Right lobe of liver (tissue), 6 donors: ENCODE measurements at regions of chr1 and their contacts with region 1.

Region 1: GRCh38 chr1:28789412-28789811 is 22.6 kb upstream of the OPRD1 start:
- DNase-seq: no peak
- ATAC-seq: no peak
- H3K4me3 ChIP-seq: no peak overlapping the region
- H3K27ac ChIP-seq: no peak overlapping the region
- H3K4me1 ChIP-seq: peaks cover 0 to 3% (median 0%) of the 10 kb centered on the region in 4 donors
- H3K27me3 ChIP-seq: no peaks in the 10 kb centered on the region
- CTCF ChIP-seq: no peak
- POLR2A ChIP-seq: no peak

Region 2: GRCh38 chr1:28417429-28417922 is 371.9 kb before region 1 on chr1:
- intact Hi-C with region 1: no loop called
- DNase-seq: no peak
- ATAC-seq: peak; percentile 32 to 94 (median 62)
- H3K4me3 ChIP-seq: no peak overlapping the region
- H3K27ac ChIP-seq: peak overlapping the region in 1 of 3 donors; percentile 44
- H3K4me1 ChIP-seq: peaks cover 0 to 16% (median 5%) of the 10 kb centered on the region in 4 donors
- H3K27me3 ChIP-seq: no peaks in the 10 kb centered on the region
- CTCF ChIP-seq: no peak
- POLR2A ChIP-seq: no peak

Region 3: DNA sequence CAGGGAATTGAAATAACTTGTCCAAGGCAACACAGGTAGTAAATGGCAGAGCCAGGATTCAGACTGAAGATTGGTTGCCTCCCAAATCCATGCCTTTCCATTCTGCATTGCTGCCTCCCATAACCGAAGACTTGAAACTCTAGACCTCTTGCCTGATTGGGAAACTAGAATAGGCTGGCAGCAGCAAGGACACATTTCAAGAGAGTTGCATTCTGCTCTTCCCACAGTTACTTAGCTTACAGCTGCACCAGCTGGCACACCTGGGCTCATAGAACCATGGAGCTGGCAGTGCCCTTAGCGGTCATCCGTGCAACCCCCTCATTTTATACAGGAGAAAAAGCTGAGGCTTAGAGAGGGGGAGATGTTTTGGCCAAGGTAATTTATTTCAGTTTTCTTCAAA is 228.5 kb before region 1 on chr1:
- intact Hi-C with region 1: no loop called
- DNase-seq: no peak
- ATAC-seq: no peak
- H3K4me3 ChIP-seq: no peak overlapping the region
- H3K27ac ChIP-seq: no peak overlapping the region
- H3K4me1 ChIP-seq: no peaks in the 10 kb centered on the region
- H3K27me3 ChIP-seq: no peaks in the 10 kb centered on the region
- CTCF ChIP-seq: no peak
- POLR2A ChIP-seq: no peak

Region 4: GRCh38 chr1:28865997-28866650 is 76.7 kb after region 1 on chr1:
- intact Hi-C with region 1: loop called in 1 of 2 experiments (anchors 5 kb)
- DNase-seq: no peak
- ATAC-seq: peak in 1 of 4 donors; percentile 73
- H3K4me3 ChIP-seq: no peak overlapping the region
- H3K27ac ChIP-seq: no peak overlapping the region
- H3K4me1 ChIP-seq: no peaks in the 10 kb centered on the region
- H3K27me3 ChIP-seq: no peaks in the 10 kb centered on the region
- CTCF ChIP-seq: no peak
- POLR2A ChIP-seq: no peak

Region 5: GRCh38 chr1:28877132-28877781 is 87.8 kb after region 1 on chr1:
- intact Hi-C with region 1: loop called in 1 of 2 experiments (anchors 5 kb)
- DNase-seq: peak; percentile 75 to 80 (median 76)
- ATAC-seq: peak; percentile 86 to 93 (median 88)
- H3K4me3 ChIP-seq: no peak overlapping the region
- H3K27ac ChIP-seq: no peak overlapping the region
- H3K4me1 ChIP-seq: peaks cover 0 to 6% (median 2%) of the 10 kb centered on the region in 4 donors
- H3K27me3 ChIP-seq: no peaks in the 10 kb centered on the region
- CTCF ChIP-seq: peak; percentile 92 to 96 (median 94)
- POLR2A ChIP-seq: no peak